ENCODE measurements at regions of chr11 and their contacts with region 1.

Region 1: DNA sequence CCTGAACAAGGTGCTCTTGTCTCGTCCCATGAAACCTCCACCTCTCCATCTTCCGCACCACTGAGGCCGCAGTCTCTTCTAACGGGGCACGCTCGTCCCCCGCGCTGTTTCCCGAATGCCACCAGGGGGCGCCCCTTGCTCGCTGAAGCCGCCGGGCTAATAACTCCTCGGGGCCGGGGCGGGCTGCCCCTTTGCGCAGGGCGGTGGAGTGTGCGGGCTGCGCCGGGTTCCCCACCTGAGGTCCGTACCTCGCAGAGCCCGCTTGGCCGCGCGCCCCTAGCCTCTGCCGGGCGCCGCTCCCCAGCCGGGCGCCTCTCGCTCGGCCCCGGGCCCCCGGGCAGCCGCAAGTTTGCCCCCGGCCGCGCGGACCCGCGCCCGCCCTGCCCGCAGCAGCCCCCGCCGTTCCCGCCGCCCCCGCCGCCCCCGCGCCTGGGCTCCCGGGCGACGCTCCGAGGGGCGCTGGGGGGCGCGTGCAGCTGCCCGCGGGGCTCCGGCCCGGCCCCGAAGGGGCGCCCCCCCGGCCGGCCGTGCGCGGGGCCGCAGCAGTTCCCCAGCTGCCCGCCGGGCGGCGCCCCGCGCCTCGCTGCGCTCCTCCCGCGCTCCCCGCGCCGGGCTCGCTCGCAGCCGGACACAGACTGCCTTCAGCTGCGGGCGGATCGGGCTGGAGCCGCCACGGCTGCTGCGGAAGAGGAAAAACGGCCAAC is at the start of gene GRIK4:
- DNase-seq: peak; percentile 64
- H3K4me3 ChIP-seq: peak within 1 kb of the TSS in 1 of 3 experiments; percentile 25
- H3K27ac ChIP-seq: no peak within 1 kb of the TSS
- H3K4me1 ChIP-seq: no peaks in the 10 kb centered on the region
- H3K27me3 ChIP-seq: peaks cover 7 to 12% of the 10 kb centered on the region in 2 experiments
- CTCF ChIP-seq: peak; percentile 89 to 94
- POLR2A ChIP-seq: no peak
- total RNA-seq, gene GRIK4: 0.74 and 1.6 TPM in 2 replicates

Region 2: GRCh38 chr11:120128782-120129172 is 382.5 kb before region 1 on chr11:
- CTCF ChIA-PET with region 1: no interaction called
- POLR2A ChIA-PET with region 1: no interaction called
- dilution Hi-C with region 1: no loop called
- intact Hi-C with region 1: no loop called
- DNase-seq: no peak
- H3K4me3 ChIP-seq: no peak overlapping the region
- H3K27ac ChIP-seq: no peak overlapping the region
- H3K4me1 ChIP-seq: no peaks in the 10 kb centered on the region
- H3K27me3 ChIP-seq: no peaks in the 10 kb centered on the region
- CTCF ChIP-seq: no peak
- POLR2A ChIP-seq: no peak

Region 3: DNA sequence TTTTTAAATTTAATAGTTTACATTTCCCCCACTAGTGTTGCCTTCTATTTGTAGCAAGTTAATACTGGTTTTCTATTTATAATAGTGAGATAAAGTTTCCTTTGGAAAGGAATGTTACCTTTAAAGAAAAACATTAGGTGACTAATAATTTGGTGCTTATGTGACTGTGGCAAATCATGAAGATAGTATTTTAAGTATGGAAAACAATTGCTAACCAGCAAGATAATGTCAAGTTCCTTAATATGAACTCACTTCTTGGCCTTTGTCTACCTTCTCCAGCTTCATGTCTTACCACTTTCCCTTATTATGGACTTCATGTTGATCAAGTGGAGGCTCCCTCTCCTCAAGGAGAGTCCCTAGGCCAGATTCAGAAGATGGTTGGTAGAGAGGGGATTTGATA is 147.8 kb before region 1 on chr11:
- CTCF ChIA-PET with region 1: no interaction called
- POLR2A ChIA-PET with region 1: no interaction called
- dilution Hi-C with region 1: no loop called
- intact Hi-C with region 1: no loop called
- DNase-seq: no peak
- H3K4me3 ChIP-seq: no peak overlapping the region
- H3K27ac ChIP-seq: no peak overlapping the region
- H3K4me1 ChIP-seq: peaks cover 13% of the 10 kb centered on the region
- H3K27me3 ChIP-seq: no peaks in the 10 kb centered on the region
- CTCF ChIP-seq: no peak
- POLR2A ChIP-seq: no peak

Region 4: DNA sequence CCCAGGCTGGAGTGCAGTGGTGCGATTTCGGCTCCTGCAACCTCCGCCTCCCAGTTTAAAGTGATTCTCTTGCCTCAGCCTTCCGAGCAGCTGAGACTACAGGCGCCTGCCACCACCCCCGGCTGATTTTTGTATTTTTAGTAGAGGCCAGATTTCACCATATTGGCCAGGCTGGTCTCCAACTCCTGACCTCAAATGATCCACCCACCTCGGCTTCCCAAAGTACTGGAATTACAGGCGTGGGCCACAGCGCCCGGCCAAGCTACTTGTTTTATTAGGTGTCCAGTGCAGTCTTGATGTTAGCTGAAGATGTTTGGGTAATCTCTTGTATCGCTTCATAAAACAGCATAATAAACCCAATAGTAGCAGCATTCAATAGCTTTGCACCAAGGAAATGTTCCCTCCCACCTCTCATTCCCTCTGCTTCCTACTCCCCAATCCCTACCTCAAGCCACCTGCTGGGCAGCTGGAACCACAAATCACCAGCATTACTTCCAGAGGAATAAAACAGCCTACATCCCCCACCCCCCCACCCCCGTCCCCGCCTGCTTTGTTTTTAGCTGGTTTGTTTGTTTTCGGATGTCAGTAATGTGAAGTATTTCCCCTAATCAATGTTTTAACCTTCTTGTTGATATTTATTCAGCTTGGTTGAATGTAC is 10.7 kb before region 1 on chr11:
- CTCF ChIA-PET with region 1: interaction called, 10 read pairs
- POLR2A ChIA-PET with region 1: no interaction called
- dilution Hi-C with region 1: no loop called
- intact Hi-C with region 1: no loop called
- DNase-seq: peak; percentile 10
- H3K4me3 ChIP-seq: no peak overlapping the region
- H3K27ac ChIP-seq: no peak overlapping the region
- H3K4me1 ChIP-seq: peaks cover 4% of the 10 kb centered on the region
- H3K27me3 ChIP-seq: peaks cover 0 to 3% of the 10 kb centered on the region in 2 experiments
- CTCF ChIP-seq: no peak
- POLR2A ChIP-seq: no peak

Region 5: GRCh38 chr11:120564573-120565311 is 53.5 kb after region 1 on chr11:
- CTCF ChIA-PET with region 1: interaction called, 27 read pairs
- POLR2A ChIA-PET with region 1: no interaction called
- dilution Hi-C with region 1: no loop called
- intact Hi-C with region 1: loop called (anchors 1 kb)
- DNase-seq: peak; percentile 45
- H3K4me3 ChIP-seq: peak overlapping the region in 2 of 3 experiments; percentile 24 to 39
- H3K27ac ChIP-seq: peak overlapping the region; percentile 88
- H3K4me1 ChIP-seq: peaks cover 25% of the 10 kb centered on the region
- H3K27me3 ChIP-seq: no peaks in the 10 kb centered on the region
- CTCF ChIP-seq: peak in 1 of 2 donors; percentile 30
- POLR2A ChIP-seq: no peak

Region 6: DNA sequence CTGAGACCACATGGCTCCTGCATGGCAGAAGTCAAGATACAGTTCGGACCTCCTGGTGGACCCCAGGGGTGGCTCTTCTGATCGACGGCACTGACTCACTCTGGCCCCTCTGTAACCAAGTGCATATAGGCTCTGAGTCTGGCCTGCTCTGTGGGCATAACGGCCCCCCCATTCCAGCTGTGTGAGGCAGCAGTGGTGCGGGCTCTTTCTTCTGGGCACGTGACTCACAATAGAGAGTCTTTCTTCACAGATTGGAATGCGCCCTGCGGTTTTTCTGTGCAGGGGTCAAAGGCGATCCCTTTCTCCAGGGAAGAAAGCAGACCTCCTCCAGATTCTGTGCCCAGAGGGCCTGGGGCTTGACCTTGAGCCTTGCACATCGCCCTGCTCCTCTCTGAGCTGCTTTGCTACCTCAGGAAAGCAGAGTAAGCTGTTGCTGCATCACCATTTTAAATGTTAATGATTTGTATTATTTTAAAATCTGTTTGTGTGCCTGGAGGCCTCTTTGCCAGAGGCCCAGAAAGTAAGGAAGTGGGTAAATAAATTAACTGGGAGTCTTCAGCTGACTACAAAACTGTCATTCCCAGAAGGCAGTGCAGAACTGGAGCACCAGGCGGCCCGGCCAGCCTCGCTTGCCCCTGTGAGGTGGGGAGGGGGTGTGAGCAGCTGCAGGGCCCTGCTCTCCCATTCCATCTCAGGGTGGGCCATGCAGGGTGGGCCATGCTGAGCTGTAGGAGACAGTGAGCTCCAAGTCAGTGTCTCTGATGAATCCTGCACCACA is 199.3 kb after region 1 on chr11:
- CTCF ChIA-PET with region 1: interaction called, 14 read pairs
- POLR2A ChIA-PET with region 1: no interaction called
- dilution Hi-C with region 1: no loop called
- intact Hi-C with region 1: loop called (anchors 1 kb)
- DNase-seq: no peak
- H3K4me3 ChIP-seq: no peak overlapping the region
- H3K27ac ChIP-seq: no peak overlapping the region
- H3K4me1 ChIP-seq: peaks cover 8% of the 10 kb centered on the region
- H3K27me3 ChIP-seq: no peaks in the 10 kb centered on the region
- CTCF ChIP-seq: no peak
- POLR2A ChIP-seq: no peak

Region 7: DNA sequence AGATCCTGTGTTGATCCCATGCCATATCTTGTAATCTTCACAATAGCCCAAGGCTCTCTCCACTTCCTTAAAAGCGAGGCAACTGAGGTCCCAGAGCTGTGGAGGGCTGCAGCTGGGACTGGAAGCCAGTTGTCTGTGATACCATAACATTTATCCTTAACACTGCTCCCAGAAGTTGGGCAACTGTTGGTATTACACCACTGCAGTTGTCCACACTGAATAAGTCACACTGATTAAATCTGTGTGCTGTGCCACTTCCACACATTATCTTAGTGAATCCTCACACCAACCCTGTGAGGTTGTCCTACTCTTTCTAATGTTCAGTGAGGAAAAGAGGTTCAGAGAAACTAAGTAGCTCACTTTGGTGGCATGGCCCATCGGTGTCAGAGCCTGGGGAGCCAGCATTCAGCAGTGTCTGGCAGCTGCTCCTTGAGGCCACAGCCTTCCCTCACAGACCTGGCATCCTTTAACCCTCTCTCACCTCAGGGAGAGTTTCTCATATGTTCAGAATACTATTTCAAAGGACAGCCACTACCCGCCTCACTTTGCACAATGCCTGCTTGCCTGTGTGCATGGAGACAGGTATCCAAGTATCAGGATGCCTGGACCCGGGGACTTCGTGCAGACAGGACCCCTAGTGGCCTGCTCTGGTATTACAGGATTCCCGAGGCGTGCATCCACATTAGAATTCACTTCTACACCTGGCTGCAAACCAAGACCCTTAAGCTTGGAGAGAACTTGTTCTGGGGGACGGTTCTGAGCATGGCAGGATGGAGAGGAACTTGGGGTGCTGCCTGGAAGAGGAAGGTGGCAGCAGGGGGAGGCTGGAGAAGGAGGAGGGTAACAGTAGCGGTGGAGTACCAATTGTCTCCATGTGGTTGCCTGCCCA is 290.8 kb after region 1 on chr11:
- CTCF ChIA-PET with region 1: interaction called, 29 read pairs
- POLR2A ChIA-PET with region 1: no interaction called
- dilution Hi-C with region 1: no loop called
- intact Hi-C with region 1: loop called (anchors 1 kb)
- DNase-seq: peak; percentile 58
- H3K4me3 ChIP-seq: no peak overlapping the region
- H3K27ac ChIP-seq: no peak overlapping the region
- H3K4me1 ChIP-seq: peaks cover 2% of the 10 kb centered on the region
- H3K27me3 ChIP-seq: no peaks in the 10 kb centered on the region
- CTCF ChIP-seq: peak; percentile 89 to 91
- POLR2A ChIP-seq: no peak

Region 8: DNA sequence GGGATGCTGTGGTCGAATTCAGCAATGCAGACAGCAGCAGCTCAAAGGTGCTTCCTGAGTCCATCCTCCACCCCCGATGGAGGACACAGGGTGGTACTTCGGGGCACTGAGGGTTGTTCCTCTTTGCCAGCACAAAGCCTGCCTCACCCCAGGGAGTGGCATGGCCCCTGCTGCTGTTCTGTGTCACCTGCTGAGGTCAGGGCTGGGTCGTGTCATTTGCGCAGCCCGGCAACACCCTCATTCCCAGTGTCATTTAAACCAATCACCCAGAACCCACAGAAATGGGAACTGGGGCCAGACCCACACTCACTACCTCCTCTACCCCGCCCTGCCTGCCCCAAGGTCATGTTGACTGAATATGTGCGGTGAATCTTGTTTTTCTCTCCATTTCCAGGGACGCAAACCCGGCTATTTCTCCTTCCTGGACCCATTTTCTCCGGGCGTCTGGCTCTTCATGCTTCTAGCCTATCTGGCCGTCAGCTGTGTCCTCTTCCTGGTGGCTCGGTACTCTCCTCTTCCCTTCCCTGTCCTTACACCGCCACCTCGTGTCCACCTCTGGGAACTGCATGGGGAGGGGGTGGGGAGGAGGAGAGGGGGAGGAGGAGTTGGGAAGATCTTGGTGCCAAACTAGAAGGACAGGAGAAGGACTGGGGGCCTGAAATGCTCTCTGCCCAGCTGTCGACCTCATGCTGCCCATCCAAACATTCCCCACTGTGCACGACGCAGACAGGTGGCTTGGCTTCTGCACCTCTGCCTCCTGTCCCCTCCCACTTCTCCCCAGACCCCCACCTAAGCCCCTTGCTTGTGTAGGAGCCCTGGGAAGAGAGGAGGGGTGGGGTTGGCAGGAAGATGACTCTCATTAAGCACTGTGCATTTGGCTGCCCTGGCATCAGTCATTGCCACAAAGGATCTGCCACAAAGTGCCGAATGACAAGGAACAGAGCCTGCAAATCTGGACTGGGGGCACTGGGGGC is 441.5 kb after region 1 on chr11:
- CTCF ChIA-PET with region 1: interaction called, 27 read pairs
- POLR2A ChIA-PET with region 1: no interaction called
- dilution Hi-C with region 1: no loop called
- intact Hi-C with region 1: loop called (anchors 1 kb)
- DNase-seq: peak; percentile 65
- H3K4me3 ChIP-seq: no peak overlapping the region
- H3K27ac ChIP-seq: no peak overlapping the region
- H3K4me1 ChIP-seq: no peaks in the 10 kb centered on the region
- H3K27me3 ChIP-seq: no peaks in the 10 kb centered on the region
- CTCF ChIP-seq: peak; percentile 39 to 77
- POLR2A ChIP-seq: no peak

Region 9: GRCh38 chr11:121194731-121195596 is 683.7 kb after region 1 on chr11:
- CTCF ChIA-PET with region 1: interaction called, 14 read pairs
- POLR2A ChIA-PET with region 1: no interaction called
- dilution Hi-C with region 1: no loop called
- intact Hi-C with region 1: loop called (anchors 1 kb)
- DNase-seq: peak; percentile 64
- H3K4me3 ChIP-seq: peak overlapping the region in 1 of 3 experiments; percentile 22
- H3K27ac ChIP-seq: no peak overlapping the region
- H3K4me1 ChIP-seq: peaks cover 5% of the 10 kb centered on the region
- H3K27me3 ChIP-seq: no peaks in the 10 kb centered on the region
- CTCF ChIP-seq: peak; percentile 68 to 76
- POLR2A ChIP-seq: no peak